Prostate gland (tissue), 2 donors: ENCODE measurements at regions of chr6 and their contacts with region 1.

Region 1: GRCh38 chr6:168884646-168885086 is 369.0 kb downstream of the THBS2 start:
- DNase-seq: peak; percentile 60
- H3K4me3 ChIP-seq: no peak overlapping the region
- H3K27ac ChIP-seq: no peak overlapping the region
- H3K4me1 ChIP-seq: no peaks in the 10 kb centered on the region
- H3K27me3 ChIP-seq: no peaks in the 10 kb centered on the region
- CTCF ChIP-seq: peak; percentile 90 to 96 (median 94)
- POLR2A ChIP-seq: no peak

Region 2: GRCh38 chr6:168616816-168617765 is 267.6 kb before region 1 on chr6:
- intact Hi-C with region 1: loop called (anchors 5 kb)
- DNase-seq: no peak
- H3K4me3 ChIP-seq: no peak overlapping the region
- H3K27ac ChIP-seq: no peak overlapping the region
- H3K4me1 ChIP-seq: no peaks in the 10 kb centered on the region
- H3K27me3 ChIP-seq: no peaks in the 10 kb centered on the region
- CTCF ChIP-seq: peak in 3 of 4 experiments; percentile 8 to 53 (median 14)
- POLR2A ChIP-seq: no peak

Region 3: DNA sequence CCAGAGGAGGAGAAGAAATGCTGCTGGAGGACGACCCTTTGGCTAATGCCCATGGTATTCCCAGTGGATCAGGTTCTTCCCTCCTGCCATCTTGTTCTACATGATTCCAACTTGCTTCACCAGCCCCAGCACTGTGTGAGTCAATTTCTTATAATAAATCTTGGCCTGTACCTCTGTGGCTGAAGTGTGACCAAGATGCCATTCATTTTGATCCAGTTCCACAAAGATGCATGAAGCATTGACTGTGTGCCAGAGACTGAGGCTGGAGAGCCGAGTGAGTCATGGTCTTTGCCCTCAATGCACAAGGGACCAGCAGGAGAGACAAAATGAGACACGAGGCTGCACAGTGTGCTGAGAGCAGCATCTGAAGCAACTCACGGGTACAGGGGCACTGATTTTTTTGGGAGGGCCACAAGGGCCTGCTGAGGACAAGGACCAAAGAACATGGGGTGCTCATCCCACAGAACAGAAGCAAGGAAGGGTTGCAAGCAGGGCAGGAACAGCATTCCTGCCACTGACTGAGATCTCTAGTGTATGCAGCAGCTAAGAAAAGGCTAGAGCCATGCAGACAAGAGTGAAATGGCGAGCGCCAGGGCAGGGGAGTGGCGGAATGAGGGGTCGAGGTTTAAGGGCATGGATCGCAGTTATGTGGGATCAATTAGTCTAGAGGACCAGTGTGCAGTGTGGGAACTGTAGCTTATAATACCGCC is 162.0 kb after region 1 on chr6:
- intact Hi-C with region 1: no loop called
- DNase-seq: no peak
- H3K4me3 ChIP-seq: no peak overlapping the region
- H3K27ac ChIP-seq: no peak overlapping the region
- H3K4me1 ChIP-seq: no peaks in the 10 kb centered on the region
- H3K27me3 ChIP-seq: no peaks in the 10 kb centered on the region
- CTCF ChIP-seq: no peak
- POLR2A ChIP-seq: no peak

Region 4: DNA sequence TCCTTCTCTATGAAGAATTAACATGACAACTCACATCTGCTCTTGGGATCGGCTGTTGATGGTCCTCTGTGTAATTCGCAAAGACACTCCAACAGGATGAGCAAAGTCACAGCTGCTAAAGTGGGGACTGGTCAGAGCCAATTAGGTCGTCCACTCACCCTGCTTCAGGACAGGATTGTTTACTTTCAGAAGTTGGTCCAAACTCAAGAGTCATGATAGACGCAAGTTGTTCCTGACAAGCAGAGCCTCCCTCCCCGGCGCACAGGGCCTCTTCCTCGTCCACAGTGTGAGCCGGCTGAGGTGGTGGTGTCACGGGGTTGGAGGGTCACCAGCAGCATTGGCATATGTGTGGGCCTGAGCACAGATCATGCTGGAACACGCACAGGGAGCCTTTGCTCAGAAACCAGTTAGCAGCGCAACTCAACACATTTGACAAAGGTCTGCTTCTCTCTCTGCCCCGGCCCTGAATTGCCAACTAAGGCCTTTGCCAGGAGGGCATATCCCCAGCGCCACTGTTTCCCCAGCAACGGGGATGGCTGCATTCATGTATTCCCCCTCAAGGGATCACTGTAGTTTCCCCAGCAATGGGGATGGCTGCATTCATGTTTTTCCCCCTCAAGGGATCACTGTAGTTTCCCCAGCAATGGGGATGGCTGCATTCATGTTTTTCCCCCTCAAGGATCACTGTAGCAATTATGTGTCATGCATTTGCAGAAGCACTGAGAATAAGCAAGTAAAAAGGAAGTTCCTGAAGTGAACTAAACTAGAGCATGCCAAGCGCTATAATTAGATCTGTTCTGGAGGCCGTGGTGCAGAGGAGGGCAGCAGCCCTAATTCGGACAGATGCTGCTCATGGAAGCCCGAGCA is 257.2 kb after region 1 on chr6:
- intact Hi-C with region 1: no loop called
- DNase-seq: no peak
- H3K4me3 ChIP-seq: no peak overlapping the region
- H3K27ac ChIP-seq: peak overlapping the region in 1 of 2 donors; percentile 18
- H3K4me1 ChIP-seq: no peaks in the 10 kb centered on the region
- H3K27me3 ChIP-seq: no peaks in the 10 kb centered on the region
- CTCF ChIP-seq: no peak
- POLR2A ChIP-seq: no peak